CD8-positive, alpha-beta T cell (primary cell): ENCODE measurements at regions of chr2 and their contacts with region 1.

Region 1: GRCh38 chr2:121810959-121811853 is 55.8 kb downstream of the TSN start:
- DNase-seq: peak in 2 of 9 experiments; percentile 10 to 14
- ATAC-seq: no peak
- H3K4me3 ChIP-seq: no peak overlapping the region
- H3K4me3 Mint-ChIP-seq: no peak overlapping the region
- H3K27ac ChIP-seq: no peak overlapping the region
- H3K27ac Mint-ChIP-seq: no peak overlapping the region
- H3K4me1 ChIP-seq: no peaks in the 10 kb centered on the region
- H3K4me1 Mint-ChIP-seq: no peaks in the 10 kb centered on the region
- H3K27me3 ChIP-seq: no peaks in the 10 kb centered on the region
- H3K27me3 Mint-ChIP-seq: peaks cover 13% of the 10 kb centered on the region
- CTCF ChIP-seq: peak; percentile 15

Region 2: DNA sequence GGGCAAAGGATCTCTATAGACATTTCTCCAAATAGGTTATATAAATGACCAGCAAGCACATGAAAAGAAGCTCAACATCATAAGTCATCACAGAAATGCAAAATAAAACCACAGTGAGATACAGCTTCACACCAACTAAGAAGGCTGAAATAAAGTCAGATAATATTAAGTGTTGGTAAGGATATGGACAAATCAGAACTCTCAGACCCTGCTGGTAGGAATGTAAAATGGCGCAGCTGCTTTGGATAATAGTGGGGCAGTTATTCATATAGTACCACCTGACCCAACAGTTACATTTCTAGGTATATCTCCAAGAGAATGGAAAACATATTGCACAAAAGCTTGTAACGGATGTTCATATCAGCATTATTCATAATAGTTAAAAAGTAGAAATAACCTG is 1784.3 kb before region 1 on chr2:
- CTCF ChIA-PET with region 1: no interaction called
- POLR2A ChIA-PET with region 1: no interaction called
- intact Hi-C with region 1: no loop called
- DNase-seq: no peak
- ATAC-seq: no peak
- H3K4me3 ChIP-seq: no peak overlapping the region
- H3K4me3 Mint-ChIP-seq: no peak overlapping the region
- H3K27ac ChIP-seq: no peak overlapping the region
- H3K27ac Mint-ChIP-seq: no peak overlapping the region
- H3K4me1 ChIP-seq: no peaks in the 10 kb centered on the region
- H3K4me1 Mint-ChIP-seq: peaks cover 2% of the 10 kb centered on the region
- H3K27me3 ChIP-seq: no peaks in the 10 kb centered on the region
- H3K27me3 Mint-ChIP-seq: no peaks in the 10 kb centered on the region
- CTCF ChIP-seq: no peak

Region 3: DNA sequence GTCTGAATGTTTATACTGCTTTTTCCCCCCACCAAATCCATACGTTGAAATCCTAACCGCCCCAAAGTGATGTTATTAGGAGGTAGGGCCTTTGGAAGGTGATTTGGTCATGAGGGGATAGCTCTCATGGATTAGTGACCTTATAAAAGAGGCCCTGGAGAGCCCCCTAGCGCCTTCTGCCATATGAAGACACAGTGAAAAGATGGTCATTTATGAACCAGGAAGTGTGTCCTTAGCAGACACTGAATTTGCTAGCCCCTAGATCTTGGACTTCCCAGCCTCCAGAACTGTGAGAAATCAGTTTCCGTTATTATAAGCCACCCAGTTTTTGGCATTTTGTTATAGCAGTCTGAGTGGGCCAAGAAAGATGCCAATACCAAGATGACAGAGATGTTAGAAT is 63.0 kb before region 1 on chr2:
- CTCF ChIA-PET with region 1: no interaction called
- POLR2A ChIA-PET with region 1: no interaction called
- intact Hi-C with region 1: no loop called
- DNase-seq: peak in 2 of 9 experiments; percentile 27 to 33
- ATAC-seq: no peak
- H3K4me3 ChIP-seq: no peak overlapping the region
- H3K4me3 Mint-ChIP-seq: no peak overlapping the region
- H3K27ac ChIP-seq: no peak overlapping the region
- H3K27ac Mint-ChIP-seq: no peak overlapping the region
- H3K4me1 ChIP-seq: no peaks in the 10 kb centered on the region
- H3K4me1 Mint-ChIP-seq: no peaks in the 10 kb centered on the region
- H3K27me3 ChIP-seq: no peaks in the 10 kb centered on the region
- H3K27me3 Mint-ChIP-seq: no peaks in the 10 kb centered on the region
- CTCF ChIP-seq: no peak

Region 4: DNA sequence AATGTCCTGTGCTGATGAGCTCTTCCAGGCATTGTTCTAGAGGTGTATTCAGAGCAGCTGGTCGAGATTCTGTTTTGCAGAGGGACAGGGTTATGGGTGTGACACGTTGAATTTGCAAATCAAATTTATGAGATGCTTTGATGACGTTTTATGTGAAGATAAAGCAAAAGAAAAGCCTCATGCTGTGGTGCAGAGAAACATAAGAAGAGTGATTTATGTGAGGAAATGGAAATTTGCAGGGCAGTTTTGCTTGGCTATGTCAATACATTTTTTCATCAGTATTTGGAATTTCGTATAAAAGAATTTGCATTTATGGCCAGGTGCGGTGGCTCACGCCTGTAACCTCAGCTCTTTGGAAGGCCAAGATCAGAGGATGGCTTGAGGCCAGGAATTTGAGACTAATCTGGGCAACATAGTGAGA is 19.4 kb before region 1 on chr2:
- CTCF ChIA-PET with region 1: no interaction called
- POLR2A ChIA-PET with region 1: no interaction called
- intact Hi-C with region 1: loop called in 1 of 2 experiments (anchors 1 kb)
- DNase-seq: no peak
- ATAC-seq: no peak
- H3K4me3 ChIP-seq: no peak overlapping the region
- H3K4me3 Mint-ChIP-seq: no peak overlapping the region
- H3K27ac ChIP-seq: no peak overlapping the region
- H3K27ac Mint-ChIP-seq: no peak overlapping the region
- H3K4me1 ChIP-seq: no peaks in the 10 kb centered on the region
- H3K4me1 Mint-ChIP-seq: no peaks in the 10 kb centered on the region
- H3K27me3 ChIP-seq: no peaks in the 10 kb centered on the region
- H3K27me3 Mint-ChIP-seq: peaks cover 27% of the 10 kb centered on the region
- CTCF ChIP-seq: no peak